PC-3 (cell line): ENCODE measurements at regions of chr4 and their contacts with region 1.

Region 1: GRCh38 chr4:133148690-133149363 is at the start of gene PCDH10:
- DNase-seq: peak; percentile 85
- ATAC-seq: peak; percentile 86
- H3K4me3 ChIP-seq: peak within 1 kb of the TSS; percentile 72
- H3K27ac ChIP-seq: no peak within 1 kb of the TSS
- H3K4me1 ChIP-seq: no peaks in the 10 kb centered on the region
- H3K27me3 ChIP-seq: no peaks in the 10 kb centered on the region
- CTCF ChIP-seq: no peak
- total RNA-seq, gene PCDH10: 0.11 and 0.23 TPM in 2 replicates

Region 2: DNA sequence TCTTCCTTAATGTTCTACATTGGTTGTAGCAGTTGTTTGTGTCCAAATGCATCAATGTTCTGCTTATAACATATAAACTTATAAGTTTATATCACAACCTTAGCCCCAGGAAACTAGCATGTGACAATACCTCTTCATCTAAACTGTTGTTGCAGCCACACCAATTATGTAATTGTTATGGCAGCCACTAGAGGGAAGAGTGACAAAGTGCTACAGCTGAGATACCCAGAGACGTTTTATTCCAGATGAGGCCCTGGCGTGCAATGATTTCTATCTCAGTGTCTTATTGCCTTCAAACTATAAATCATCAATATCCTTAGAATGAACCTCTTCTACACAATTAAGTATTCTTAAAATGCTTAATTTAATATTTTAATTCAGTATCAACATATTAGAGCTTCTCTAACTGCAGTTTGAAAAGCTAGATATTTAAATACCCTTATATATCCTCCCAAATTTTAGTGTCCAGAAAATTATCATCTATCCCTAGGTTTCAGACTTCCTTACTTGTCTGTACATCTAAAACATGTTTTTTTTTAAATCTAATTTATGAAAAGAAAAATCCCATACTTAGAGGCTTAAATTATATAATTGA is 171.8 kb after region 1 on chr4:
- CTCF ChIA-PET with region 1: interaction called, 8 read pairs
- POLR2A ChIA-PET with region 1: no interaction called
- intact Hi-C with region 1: loop called (anchors 10 kb)
- DNase-seq: peak; percentile 52
- ATAC-seq: peak; percentile 51
- H3K4me3 ChIP-seq: no peak overlapping the region
- H3K27ac ChIP-seq: no peak overlapping the region
- H3K4me1 ChIP-seq: no peaks in the 10 kb centered on the region
- H3K27me3 ChIP-seq: no peaks in the 10 kb centered on the region
- CTCF ChIP-seq: peak; percentile 64

Region 3: GRCh38 chr4:133839326-133839725 is 690.5 kb after region 1 on chr4:
- CTCF ChIA-PET with region 1: no interaction called
- POLR2A ChIA-PET with region 1: no interaction called
- intact Hi-C with region 1: loop called (anchors 2 kb)
- DNase-seq: peak; percentile 7
- ATAC-seq: no peak
- H3K4me3 ChIP-seq: no peak overlapping the region
- H3K27ac ChIP-seq: no peak overlapping the region
- H3K4me1 ChIP-seq: no peaks in the 10 kb centered on the region
- H3K27me3 ChIP-seq: no peaks in the 10 kb centered on the region
- CTCF ChIP-seq: peak; percentile 33; the same call in 1 of the 2 replicates

Region 4: DNA sequence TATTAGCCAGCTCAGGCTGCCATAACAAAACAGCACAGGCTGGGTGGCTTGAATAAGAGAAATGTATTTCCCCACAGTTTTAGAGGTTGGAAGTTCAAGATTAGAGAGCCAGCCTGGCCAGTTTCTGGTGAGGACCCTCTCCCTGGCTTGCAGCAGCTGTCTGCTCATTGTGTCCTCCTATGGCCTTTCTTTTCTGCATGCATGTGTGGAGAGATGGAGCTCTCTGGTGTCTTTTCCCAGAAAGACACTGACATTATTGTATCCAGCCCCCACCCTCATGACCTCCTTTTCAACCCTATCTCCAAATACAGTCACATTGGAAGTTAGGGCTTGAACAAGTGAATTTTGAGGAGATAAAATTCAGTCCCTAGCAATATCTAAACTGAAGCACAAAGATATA is 1316.6 kb after region 1 on chr4:
- CTCF ChIA-PET with region 1: no interaction called
- POLR2A ChIA-PET with region 1: no interaction called
- intact Hi-C with region 1: loop called (anchors 10 kb)
- DNase-seq: no peak
- ATAC-seq: no peak
- H3K4me3 ChIP-seq: no peak overlapping the region
- H3K27ac ChIP-seq: no peak overlapping the region
- H3K4me1 ChIP-seq: no peaks in the 10 kb centered on the region
- H3K27me3 ChIP-seq: no peaks in the 10 kb centered on the region
- CTCF ChIP-seq: no peak

Region 5: DNA sequence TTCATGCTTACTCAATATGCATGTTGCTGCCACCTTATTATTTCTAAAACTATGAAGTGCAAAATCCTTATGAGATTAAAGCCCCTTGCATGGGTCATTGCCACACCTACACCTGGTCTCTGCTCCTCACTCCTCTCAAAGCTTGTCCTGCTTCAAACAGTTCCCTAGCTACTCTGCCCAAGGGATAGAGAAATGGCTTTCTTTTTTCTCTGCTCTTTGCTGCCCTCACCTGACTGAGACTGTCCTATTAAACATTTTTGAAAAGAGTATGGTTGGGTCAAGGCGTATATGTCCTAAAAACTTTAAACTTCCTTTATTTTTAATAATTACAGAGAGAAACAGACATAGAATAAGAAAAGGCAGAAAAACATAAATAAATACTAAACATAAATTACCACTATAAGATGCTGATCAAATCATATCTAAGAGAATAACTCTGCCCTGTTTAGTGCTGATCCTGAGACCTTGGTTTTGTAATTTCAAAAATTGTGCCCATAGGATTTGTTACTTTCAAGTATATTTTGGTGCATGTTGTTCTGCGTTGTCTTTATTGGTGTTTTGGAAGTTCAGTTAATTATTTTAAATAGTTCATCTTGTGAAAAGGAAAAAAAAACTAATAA is 1757.7 kb after region 1 on chr4:
- CTCF ChIA-PET with region 1: no interaction called
- POLR2A ChIA-PET with region 1: no interaction called
- intact Hi-C with region 1: loop called (anchors 1 kb)
- DNase-seq: peak; percentile 35
- ATAC-seq: peak; percentile 75
- H3K4me3 ChIP-seq: no peak overlapping the region
- H3K27ac ChIP-seq: no peak overlapping the region
- H3K4me1 ChIP-seq: no peaks in the 10 kb centered on the region
- H3K27me3 ChIP-seq: no peaks in the 10 kb centered on the region
- CTCF ChIP-seq: peak; percentile 56